MCF 10A (cell line): ENCODE measurements at regions of chr5 and their contacts with region 1.

Region 1: DNA sequence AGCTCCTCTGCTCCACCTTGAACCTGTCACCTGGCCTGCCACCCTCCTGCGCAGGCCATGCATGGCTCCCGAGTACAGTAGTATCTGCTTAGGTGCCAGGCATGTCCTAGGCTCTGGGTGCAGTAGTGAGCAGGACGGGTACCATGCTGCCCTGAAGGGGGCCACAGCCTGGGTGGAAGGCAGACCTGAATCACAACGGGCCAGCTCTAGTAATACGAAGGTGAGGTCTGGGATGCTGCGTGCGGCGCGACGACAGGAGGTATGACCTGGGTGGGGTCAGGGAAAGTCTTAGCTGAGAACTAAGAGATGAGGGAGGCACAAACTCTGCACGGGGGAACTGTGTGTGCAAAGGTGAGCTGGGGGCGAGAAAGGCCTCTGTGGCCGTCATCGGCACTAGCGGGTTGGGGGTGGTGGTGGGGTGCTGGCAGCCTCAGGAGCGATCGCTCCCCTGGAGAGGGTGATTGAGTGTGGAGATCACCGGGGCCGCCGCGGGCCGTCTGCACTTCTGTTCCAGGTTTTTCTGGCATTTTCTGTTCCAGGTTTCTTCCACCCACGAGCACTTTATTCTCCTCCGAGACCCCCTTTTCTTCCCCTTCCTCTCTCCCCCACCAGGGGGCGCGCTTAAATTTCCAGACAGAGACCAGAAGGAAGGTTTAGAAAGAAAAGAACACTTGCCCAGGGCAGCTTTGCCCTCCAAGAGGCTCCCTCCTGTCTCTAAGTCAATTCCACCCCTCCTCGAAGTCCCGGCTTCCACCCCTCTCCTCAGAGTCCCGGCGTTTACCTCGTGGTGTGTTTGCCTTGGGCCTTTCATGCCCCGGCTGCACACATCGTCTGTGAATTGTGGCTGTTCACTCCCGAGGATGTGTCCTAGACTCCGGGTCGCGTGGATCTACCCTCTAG is 15.1 kb downstream of the PDLIM4 start:
- DNase-seq: peak; percentile 68
- H3K4me3 Mint-ChIP-seq: no peak overlapping the region
- H3K27ac Mint-ChIP-seq: no peak overlapping the region
- H3K4me1 Mint-ChIP-seq: peaks cover 2% of the 10 kb centered on the region
- H3K27me3 Mint-ChIP-seq: no peaks in the 10 kb centered on the region
- CTCF ChIP-seq: peak; percentile 96

Region 2: GRCh38 chr5:131916481-131916880 is 356.1 kb before region 1 on chr5:
- CTCF ChIA-PET with region 1: no interaction called
- POLR2A ChIA-PET with region 1: no interaction called
- intact Hi-C with region 1: no loop called
- DNase-seq: no peak
- H3K4me3 Mint-ChIP-seq: no peak overlapping the region
- H3K27ac Mint-ChIP-seq: no peak overlapping the region
- H3K4me1 Mint-ChIP-seq: no peaks in the 10 kb centered on the region
- H3K27me3 Mint-ChIP-seq: peaks cover 89% of the 10 kb centered on the region
- CTCF ChIP-seq: no peak

Region 3: GRCh38 chr5:132260714-132261551 is 11.6 kb before region 1 on chr5:
- CTCF ChIA-PET with region 1: interaction called, 33 read pairs
- POLR2A ChIA-PET with region 1: interaction called, 6 read pairs
- intact Hi-C with region 1: no loop called
- DNase-seq: peak; percentile 97
- H3K4me3 Mint-ChIP-seq: peak overlapping the region; percentile 83
- H3K27ac Mint-ChIP-seq: peak overlapping the region; percentile 74
- H3K4me1 Mint-ChIP-seq: peaks cover 68% of the 10 kb centered on the region
- H3K27me3 Mint-ChIP-seq: no peaks in the 10 kb centered on the region
- CTCF ChIP-seq: no peak

Region 4: DNA sequence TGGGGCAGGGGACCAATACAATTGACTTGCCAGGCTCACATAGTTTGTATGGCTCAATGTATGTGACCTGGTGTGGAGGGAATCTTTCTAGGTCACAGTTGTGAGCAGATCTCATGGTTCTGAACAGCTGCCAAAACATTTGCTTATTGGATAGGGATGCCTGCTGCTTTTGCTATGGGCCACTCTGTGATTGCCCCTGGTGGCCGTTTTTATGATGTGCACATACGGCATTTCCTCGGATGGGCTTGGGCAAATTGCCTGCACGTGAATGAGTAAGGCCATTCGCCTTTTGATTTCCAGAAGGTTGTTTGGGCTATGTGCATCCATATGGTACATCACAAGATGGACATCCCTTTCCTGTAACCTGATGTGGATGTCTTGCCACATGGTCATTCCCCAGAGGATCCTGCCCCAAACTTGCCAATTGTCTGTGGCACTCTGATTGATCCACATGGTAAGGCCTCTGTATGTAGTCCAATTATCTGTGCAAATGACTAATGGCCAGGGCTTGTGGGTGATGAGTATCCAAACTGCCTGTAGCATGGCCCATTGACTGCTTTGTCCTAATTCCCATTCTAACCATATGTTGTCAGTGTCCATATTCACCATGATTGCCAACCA is 11.0 kb after region 1 on chr5:
- CTCF ChIA-PET with region 1: interaction called, 27 read pairs
- POLR2A ChIA-PET with region 1: interaction called, 10 read pairs
- intact Hi-C with region 1: no loop called
- DNase-seq: peak; percentile 85
- H3K4me3 Mint-ChIP-seq: no peak overlapping the region
- H3K27ac Mint-ChIP-seq: no peak overlapping the region
- H3K4me1 Mint-ChIP-seq: no peaks in the 10 kb centered on the region
- H3K27me3 Mint-ChIP-seq: peaks cover 10% of the 10 kb centered on the region
- CTCF ChIP-seq: peak; percentile 43

Region 5: GRCh38 chr5:132369474-132370180 is 97.1 kb after region 1 on chr5 and contains the start of gene SLC22A5:
- CTCF ChIA-PET with region 1: interaction called, 3 read pairs
- POLR2A ChIA-PET with region 1: interaction called, 4 read pairs
- intact Hi-C with region 1: loop called (anchors 2 kb)
- DNase-seq: peak; percentile 84
- H3K4me3 Mint-ChIP-seq: peak within 1 kb of the TSS; percentile 79
- H3K27ac Mint-ChIP-seq: peak within 1 kb of the TSS; percentile 39
- H3K4me1 Mint-ChIP-seq: peaks cover 44% of the 10 kb centered on the region
- H3K27me3 Mint-ChIP-seq: no peaks in the 10 kb centered on the region
- CTCF ChIP-seq: no peak
- total RNA-seq, gene SLC22A5: 122 and 167 TPM in 2 replicates